GM13977 (cell line): ENCODE measurements at regions of chr6 and their contacts with region 1.

Region 1: GRCh38 chr6:27312146-27312949 is at the start of gene POM121L2:
- DNase-seq: peak; percentile 74
- CTCF ChIP-seq: peak; percentile 82

Region 2: DNA sequence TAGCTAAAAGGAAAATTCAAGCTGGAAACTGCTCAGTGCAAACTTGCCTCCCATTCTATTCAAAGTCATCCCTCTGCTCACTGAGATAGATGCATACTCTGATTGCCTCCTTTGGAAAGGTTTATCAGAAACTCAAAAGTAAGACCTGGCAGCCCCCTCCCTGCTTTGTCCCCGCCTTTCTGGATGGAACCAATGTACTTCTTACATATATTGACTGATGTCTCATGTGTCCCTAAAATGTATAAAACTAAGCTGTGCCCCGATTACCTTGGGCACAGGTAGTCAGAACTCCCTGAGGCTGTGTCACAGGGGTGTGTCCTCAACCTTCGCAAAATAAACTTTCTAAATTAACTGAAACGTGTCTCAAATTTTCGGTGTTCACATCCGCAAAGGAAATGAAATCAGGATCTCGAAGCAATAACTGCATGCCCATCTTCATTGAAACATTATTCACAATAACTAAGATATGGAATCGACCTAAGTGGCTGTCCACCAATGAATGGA is 293.9 kb before region 1 on chr6:
- in situ Hi-C with region 1: no loop called
- DNase-seq: no peak
- CTCF ChIP-seq: no peak

Region 3: GRCh38 chr6:27078734-27079357 is 233.5 kb before region 1 on chr6:
- in situ Hi-C with region 1: no loop called
- DNase-seq: peak; percentile 34
- CTCF ChIP-seq: peak; percentile 65

Region 4: GRCh38 chr6:27608916-27609883 is 296.9 kb after region 1 on chr6:
- in situ Hi-C with region 1: loop called (anchors 25 kb)
- DNase-seq: no peak
- CTCF ChIP-seq: peak; percentile 88

Region 5: GRCh38 chr6:27753668-27754407 is 441.5 kb after region 1 on chr6:
- in situ Hi-C with region 1: loop called (anchors 25 kb)
- DNase-seq: peak; percentile 74
- CTCF ChIP-seq: no peak